ENCODE measurements at regions of chr9 and their contacts with region 1.

Region 1: GRCh38 chr9:91422758-91423711 is 597 bp downstream of the NFIL3 start:
- DNase-seq: peak; percentile 60 to 80
- ATAC-seq: peak; percentile 12 to 40 (median 26)
- H3K4me3 ChIP-seq: peak overlapping the region; percentile 87
- H3K27ac ChIP-seq: peak overlapping the region; percentile 95
- H3K4me1 ChIP-seq: peaks cover 24% of the 10 kb centered on the region
- H3K27me3 ChIP-seq: no peaks in the 10 kb centered on the region
- CTCF ChIP-seq: peak; percentile 39

Region 2: GRCh38 chr9:90921111-90921510 is 501.9 kb before region 1 on chr9:
- intact Hi-C with region 1: loop called in 1 of 2 experiments (anchors 2 kb)
- DNase-seq: peak; percentile 81 to 98
- ATAC-seq: peak; percentile 90 to 96 (median 92)
- H3K4me3 ChIP-seq: no peak overlapping the region
- H3K27ac ChIP-seq: peak overlapping the region; percentile 76
- H3K4me1 ChIP-seq: peaks cover 18% of the 10 kb centered on the region
- H3K27me3 ChIP-seq: no peaks in the 10 kb centered on the region
- CTCF ChIP-seq: no peak

Region 3: GRCh38 chr9:91001146-91001611 is 421.9 kb before region 1 on chr9:
- intact Hi-C with region 1: no loop called
- DNase-seq: no peak
- ATAC-seq: no peak
- H3K4me3 ChIP-seq: no peak overlapping the region
- H3K27ac ChIP-seq: no peak overlapping the region
- H3K4me1 ChIP-seq: no peaks in the 10 kb centered on the region
- H3K27me3 ChIP-seq: no peaks in the 10 kb centered on the region
- CTCF ChIP-seq: no peak

Region 4: DNA sequence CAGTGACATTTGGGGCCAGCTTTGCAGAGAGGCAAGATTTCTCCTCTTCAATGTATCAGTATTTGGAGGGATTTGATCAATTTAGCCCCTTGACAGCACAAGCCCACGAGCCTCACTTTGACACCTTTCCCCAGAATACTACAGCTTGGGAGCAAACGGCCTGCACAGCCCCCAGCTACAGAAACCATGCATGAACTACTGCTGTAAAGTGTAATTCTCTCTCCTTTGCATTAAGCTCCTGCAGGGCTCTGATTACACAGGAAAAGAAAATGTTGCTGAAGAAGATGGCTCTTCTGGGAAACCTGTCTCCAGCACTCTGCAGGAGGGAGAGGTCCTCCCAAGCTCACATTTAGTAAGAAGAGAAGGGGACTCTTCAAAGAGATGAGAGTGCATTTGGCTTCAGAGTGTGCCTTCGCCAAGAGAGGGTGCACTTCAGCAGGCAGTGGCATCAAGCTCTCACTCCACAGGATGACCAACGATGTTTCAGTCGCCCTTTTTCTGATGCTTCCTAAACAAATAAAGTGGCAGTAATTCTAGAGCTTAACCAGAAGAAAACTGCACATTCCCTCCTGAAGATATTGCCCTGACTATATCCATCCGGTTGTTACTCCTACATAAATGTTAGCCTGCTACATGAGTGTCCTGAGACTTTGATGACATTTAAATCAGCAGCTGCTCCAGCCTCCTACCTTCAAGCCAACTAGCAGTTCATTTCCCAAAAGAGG is 333.5 kb before region 1 on chr9:
- intact Hi-C with region 1: loop called in 1 of 2 experiments (anchors 5 kb)
- DNase-seq: no peak
- ATAC-seq: peak; percentile 73 to 87 (median 74)
- H3K4me3 ChIP-seq: no peak overlapping the region
- H3K27ac ChIP-seq: no peak overlapping the region
- H3K4me1 ChIP-seq: peaks cover 10% of the 10 kb centered on the region
- H3K27me3 ChIP-seq: no peaks in the 10 kb centered on the region
- CTCF ChIP-seq: peak; percentile 51

Region 5: GRCh38 chr9:91193658-91194391 is 229.2 kb before region 1 on chr9:
- intact Hi-C with region 1: loop called (anchors 2 to 5 kb)
- DNase-seq: peak; percentile 90 to 94
- ATAC-seq: peak; percentile 61 to 71 (median 66)
- H3K4me3 ChIP-seq: peak overlapping the region; percentile 70
- H3K27ac ChIP-seq: peak overlapping the region; percentile 100
- H3K4me1 ChIP-seq: peaks cover 54% of the 10 kb centered on the region
- H3K27me3 ChIP-seq: no peaks in the 10 kb centered on the region
- CTCF ChIP-seq: no peak

Region 6: DNA sequence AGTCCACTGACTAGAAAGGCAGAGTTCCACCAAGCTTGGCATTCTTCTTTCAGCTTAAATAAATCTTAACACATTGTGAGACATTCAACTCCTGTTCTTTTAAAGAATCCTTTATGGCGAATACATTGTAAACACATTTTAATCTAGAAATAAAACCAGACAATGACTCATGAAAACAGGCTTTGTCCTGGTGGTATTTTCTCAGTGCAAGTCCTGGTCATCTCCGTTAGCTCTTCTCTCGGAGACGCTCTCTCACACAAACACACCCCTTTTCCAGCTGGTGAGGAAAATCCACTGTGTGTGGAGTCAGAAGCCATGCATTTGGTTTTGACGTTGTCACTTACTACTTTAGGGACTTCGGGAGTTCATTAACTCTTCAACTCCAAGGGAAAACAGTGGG is 201.7 kb before region 1 on chr9:
- intact Hi-C with region 1: no loop called
- DNase-seq: no peak
- ATAC-seq: peak in 2 of 4 donors; percentile 49 to 51
- H3K4me3 ChIP-seq: no peak overlapping the region
- H3K27ac ChIP-seq: peak overlapping the region; percentile 58
- H3K4me1 ChIP-seq: peaks cover 13% of the 10 kb centered on the region
- H3K27me3 ChIP-seq: no peaks in the 10 kb centered on the region
- CTCF ChIP-seq: no peak

Region 7: DNA sequence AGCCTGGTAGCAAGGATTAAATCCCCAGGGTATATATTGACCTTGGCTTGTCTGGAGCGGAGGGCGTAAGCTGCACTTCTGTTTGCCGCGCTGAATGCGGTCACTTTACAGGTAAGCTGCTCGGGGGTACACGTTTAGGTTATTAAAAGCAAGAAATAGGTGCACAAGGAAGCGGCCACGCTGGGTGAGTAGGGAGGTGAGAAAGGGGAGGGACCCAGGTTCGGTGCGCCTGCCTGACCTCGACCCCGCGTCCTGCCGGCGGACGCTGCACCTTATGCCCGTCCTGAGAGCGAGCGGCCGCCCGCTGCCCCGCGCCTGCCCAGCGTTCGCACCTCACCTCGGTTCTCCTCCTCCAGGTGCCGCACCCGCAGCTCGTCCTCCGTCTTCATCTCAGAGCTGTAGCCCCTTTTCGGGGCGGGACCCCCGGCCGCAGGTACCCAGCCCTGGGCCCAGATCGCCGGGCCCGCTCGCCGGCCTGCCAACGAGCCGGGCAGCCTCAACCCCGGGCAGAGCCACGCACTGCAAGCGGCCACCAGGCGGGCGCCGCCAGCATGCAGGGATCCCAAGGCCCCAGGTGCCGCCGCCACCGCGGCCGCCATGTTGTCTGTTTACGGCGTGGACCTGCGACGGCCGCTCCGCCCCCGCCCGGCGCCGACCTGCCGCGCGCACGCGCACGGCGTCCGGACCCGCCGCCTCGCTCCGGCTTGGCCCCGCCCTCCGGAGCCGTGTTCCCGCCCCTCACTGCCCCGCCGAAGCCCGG is 61.6 kb before region 1 on chr9 and contains the start of gene AUH:
- intact Hi-C with region 1: loop called (anchors 5 kb)
- DNase-seq: peak; percentile 87 to 93
- ATAC-seq: peak; percentile 98 to 99 (median 99)
- H3K4me3 ChIP-seq: peak within 1 kb of the TSS; percentile 99
- H3K27ac ChIP-seq: peak within 1 kb of the TSS; percentile 98
- H3K4me1 ChIP-seq: peaks cover 38% of the 10 kb centered on the region
- H3K27me3 ChIP-seq: no peaks in the 10 kb centered on the region
- CTCF ChIP-seq: no peak
- total RNA-seq, gene AUH: 14.1 to 20.6 (median 18.4) TPM

Region 8: DNA sequence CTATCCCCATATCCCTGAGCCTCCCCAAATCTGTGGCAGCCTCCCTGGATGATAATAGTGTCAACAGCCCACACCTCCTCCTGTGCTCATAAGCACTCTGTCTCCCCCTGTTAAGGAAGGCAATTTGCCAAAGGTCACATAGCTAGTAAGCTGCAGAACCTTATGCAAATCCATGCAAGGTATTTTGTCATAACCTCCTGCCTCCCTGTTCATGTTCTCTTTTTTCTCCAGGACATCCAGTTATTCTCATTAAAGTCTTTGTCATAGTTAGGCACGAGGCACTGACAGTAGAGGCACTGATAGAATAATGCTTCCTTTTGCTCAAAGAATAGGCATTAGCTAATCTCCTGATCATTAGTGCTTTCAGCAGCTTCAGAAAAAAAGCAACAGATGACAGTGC is 51.1 kb before region 1 on chr9:
- intact Hi-C with region 1: no loop called
- DNase-seq: no peak
- ATAC-seq: no peak
- H3K4me3 ChIP-seq: no peak overlapping the region
- H3K27ac ChIP-seq: no peak overlapping the region
- H3K4me1 ChIP-seq: no peaks in the 10 kb centered on the region
- H3K27me3 ChIP-seq: no peaks in the 10 kb centered on the region
- CTCF ChIP-seq: no peak

Region 9: GRCh38 chr9:91443321-91443993 is 20.4 kb after region 1 on chr9:
- intact Hi-C with region 1: no loop called
- DNase-seq: no peak
- ATAC-seq: no peak
- H3K4me3 ChIP-seq: no peak overlapping the region
- H3K27ac ChIP-seq: no peak overlapping the region
- H3K4me1 ChIP-seq: no peaks in the 10 kb centered on the region
- H3K27me3 ChIP-seq: peaks cover 0 to 5% (median 1%) of the 10 kb centered on the region in 3 donors
- CTCF ChIP-seq: no peak

Measured in psoas muscle (tissue), 8 donors.